Left cardiac atrium (tissue), 4 donors: ENCODE measurements at regions of chr3 and their contacts with region 1.

Region 1: DNA sequence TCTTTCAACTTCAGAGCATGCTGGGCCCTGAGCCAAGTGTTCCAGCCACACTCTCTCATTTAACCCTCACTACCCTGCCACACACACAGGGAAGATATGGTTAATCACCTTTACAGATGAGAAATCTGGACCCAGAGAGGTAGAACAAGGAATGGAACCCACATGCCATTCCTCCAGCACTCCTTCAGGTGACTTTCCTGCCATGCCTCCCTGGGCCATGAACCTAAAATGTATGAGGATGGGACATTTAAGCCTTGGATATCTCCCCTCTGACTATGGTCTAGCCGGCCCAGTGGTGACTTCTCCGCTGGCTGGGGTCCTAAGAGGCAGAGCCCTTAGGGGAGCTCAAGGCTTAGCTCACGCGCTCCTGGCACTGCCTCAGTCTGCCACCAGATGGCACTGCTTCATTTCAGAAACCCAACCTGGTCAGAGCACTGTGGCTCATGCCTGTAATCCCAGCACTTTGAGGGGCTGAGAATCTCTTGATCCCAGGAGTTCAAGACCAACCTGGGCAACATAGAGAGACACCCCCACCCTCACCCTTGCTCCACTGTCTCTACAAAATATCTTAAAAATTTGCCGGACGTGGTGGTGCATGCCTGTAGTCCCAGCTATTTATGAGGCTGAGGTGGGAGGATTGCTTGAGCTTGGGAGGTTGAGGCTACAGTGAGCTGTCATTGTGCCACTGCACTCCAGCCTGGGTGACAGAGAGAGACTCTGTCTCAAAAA is 2.2 kb upstream of the DCAF1 start:
- DNase-seq: peak; percentile 82
- ATAC-seq: peak in 1 of 2 donors; percentile 9

Region 2: DNA sequence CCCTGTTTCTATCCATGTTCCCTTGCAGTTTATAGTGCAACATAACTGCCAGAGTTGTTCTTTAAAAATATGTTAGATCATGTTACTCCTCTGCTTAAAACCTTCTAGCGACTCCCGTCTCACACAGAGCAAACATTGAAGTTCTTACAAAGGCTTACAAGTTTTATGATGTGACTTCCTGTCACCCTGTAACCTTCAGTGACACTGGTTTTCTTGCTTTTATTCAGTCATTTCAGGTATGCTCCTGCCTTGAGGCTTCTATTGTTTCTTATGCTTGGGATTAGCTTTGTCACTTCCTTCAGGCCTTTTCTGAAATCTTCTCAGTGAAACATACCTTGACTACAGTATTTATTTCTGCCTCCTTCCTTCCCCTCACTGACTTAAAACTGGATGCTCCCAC is 575.1 kb before region 1 on chr3:
- intact Hi-C with region 1: no loop called
- DNase-seq: no peak
- ATAC-seq: no peak

Region 3: GRCh38 chr3:51669241-51670052 is 167.4 kb after region 1 on chr3:
- intact Hi-C with region 1: loop called (anchors 2 to 5 kb)
- DNase-seq: peak; percentile 85
- ATAC-seq: peak; percentile 4 to 42

Region 4: GRCh38 chr3:51682079-51682478 is 180.1 kb after region 1 on chr3:
- intact Hi-C with region 1: loop called in 1 of 2 experiments (anchors 2 kb)
- DNase-seq: peak; percentile 71
- ATAC-seq: peak; percentile 85 to 88

Region 5: DNA sequence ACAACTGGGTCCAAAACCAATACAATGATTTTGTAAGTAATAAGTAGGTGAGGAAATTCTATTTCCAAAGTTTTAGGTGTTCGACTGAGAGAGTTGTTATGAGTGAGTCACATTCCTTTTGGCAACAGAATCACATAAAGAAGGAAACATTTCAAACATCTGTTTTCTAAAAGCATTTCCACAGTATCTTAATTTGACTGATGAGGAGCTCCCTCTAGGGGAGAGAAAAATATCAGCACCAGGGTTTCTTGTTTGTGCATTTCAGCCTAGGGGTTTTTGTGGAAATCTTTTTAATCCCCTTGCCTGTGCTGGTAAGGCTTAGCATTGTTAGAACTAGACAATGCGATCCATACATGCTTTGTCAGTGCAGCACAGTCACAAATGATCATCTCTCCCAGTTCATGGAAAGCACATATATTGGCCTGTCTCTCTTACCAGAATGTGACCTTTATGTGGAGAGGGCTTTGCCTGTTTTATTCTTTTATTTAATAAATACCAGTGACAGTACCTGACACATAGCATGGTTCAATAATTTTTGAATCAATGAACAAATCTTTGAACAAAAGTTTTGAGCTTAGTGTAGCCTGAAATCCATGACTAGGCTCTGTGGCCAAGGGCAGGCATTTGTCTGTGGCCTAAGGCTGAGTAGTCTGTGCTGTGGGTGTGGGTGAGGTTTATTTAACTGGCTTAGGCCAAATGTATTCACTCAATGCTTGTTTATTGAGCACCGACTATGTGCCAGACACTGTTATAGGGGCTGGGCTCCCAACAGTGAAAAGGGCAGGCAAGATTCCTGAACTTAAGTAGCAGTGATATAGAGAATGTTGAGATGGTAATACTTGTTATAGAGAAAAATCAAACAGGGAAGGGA is 298.1 kb after region 1 on chr3:
- intact Hi-C with region 1: loop called (anchors 2 to 10 kb)
- DNase-seq: no peak
- ATAC-seq: peak; percentile 71 to 75